ENCODE measurements at regions of chr1 and their contacts with region 1.

Region 1: DNA sequence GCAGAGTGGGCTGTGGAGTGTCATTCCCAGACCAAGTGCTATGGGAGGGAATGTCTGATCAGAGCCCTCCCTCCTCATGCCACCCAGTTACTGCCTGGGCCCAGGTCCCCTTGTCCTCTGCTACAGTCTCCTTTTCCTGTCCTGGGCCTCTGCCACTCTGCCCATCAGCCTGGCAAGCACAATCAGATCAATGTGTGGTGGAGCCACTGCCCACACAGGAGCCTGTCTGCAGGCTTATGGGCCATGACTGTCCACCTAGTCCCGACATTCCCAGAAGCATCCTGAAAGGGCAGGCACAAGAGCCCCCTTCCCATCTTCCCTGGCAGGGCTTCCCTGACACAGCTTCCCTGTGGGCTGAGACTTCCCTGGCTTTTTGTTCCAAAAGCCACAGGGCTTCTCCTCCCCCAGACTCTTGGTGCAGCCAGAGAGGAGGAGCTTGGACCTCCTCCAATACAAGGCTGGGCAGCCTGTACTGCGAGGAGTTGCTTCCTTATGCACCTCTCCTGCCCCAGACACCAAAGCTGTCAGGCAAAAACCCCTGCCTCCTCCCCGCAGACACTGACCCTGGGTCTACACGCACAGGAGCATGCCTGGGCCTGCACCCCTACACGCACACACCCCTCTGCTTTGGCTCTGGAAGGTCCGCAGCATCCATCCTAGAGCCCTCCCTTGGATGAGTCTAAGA is 29.2 kb upstream of the CNTN2 start:
- DNase-seq: no peak
- H3K4me3 ChIP-seq: no peak overlapping the region
- H3K27ac ChIP-seq: no peak overlapping the region
- H3K4me1 ChIP-seq: peaks cover 0 to 21% (median 7%) of the 10 kb centered on the region in 4 experiments; a peak in 5 of 7 replicates
- H3K27me3 ChIP-seq: no peaks in the 10 kb centered on the region
- CTCF ChIP-seq: no peak
- EP300 ChIP-seq: no peak
- POLR2A ChIP-seq: no peak
- RAD21 ChIP-seq: no peak

Region 2: DNA sequence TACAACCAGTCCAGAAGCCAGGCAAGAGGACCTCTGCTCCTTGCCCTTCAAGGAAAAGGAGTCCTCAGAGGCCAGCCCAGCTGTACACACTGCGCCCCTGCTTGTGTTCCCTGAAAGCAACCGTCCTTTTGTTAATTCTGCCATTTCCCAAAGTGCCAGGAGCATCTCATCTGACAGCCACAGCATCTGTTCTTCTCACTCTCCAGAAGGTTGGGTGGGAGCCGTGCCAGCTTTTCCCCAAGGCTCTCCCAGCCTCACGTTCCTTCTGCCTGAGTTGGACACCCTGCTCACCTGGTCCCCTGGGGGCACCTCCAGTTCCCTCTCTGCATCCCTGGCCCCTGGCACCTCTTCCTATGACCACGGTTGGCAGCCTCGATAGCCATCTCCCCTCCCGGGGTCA is 18.7 kb after region 1 on chr1:
- CTCF ChIA-PET with region 1: interaction called, 531 read pairs
- POLR2A ChIA-PET with region 1: no interaction called
- DNase-seq: no peak
- H3K4me3 ChIP-seq: no peak overlapping the region
- H3K27ac ChIP-seq: no peak overlapping the region
- H3K4me1 ChIP-seq: peaks cover 0 to 7% (median 3%) of the 10 kb centered on the region in 4 experiments; a peak in 4 of 7 replicates
- H3K27me3 ChIP-seq: no peaks in the 10 kb centered on the region
- CTCF ChIP-seq: no peak
- EP300 ChIP-seq: no peak
- POLR2A ChIP-seq: no peak
- RAD21 ChIP-seq: no peak

Region 3: DNA sequence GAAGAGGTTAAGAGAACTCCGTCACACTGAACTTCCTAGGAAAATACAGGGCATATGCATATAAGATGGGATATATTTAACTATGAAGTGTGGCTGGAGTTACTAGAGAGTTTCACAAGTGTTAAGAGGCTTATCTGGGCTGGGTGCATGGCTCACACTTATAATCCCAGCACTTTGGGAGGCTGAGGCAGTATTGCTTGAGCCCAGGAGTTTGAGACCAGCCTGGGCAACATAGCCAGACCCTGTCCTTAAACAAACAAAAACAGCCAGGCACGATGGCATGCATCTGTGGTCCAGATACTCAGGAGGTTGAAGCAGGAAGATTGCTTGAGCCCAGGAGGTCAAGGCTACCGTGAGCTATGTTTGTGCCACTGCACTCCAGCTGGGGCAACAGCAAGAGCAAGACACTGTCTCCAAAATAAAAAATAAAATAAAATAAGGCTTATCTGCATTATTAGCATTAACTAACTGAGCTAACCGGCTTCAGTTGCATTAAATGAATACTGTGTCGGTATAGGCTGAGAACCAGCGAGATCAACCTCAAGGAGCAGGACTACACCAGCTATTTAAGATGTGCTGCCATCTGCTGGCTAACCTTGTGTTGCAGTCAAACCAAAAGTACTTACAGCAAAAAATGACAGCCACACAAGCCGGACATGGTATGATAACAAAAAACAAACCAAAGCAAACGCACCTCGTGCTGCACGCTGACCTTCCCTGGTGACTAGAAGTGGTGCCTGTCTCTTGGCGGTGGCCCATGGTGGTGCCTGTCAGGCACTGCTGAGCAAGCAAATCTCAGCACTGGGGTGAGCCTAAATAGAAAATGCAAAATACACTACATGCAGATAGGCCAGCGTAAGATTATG is 127.6 kb after region 1 on chr1:
- CTCF ChIA-PET with region 1: no interaction called
- POLR2A ChIA-PET with region 1: no interaction called
- DNase-seq: peak; percentile 57 to 87
- H3K4me3 ChIP-seq: no peak overlapping the region
- H3K27ac ChIP-seq: no peak overlapping the region
- H3K4me1 ChIP-seq: peaks cover 0 to 3% (median 1%) of the 10 kb centered on the region in 4 experiments; a peak in 2 of 7 replicates
- H3K27me3 ChIP-seq: no peaks in the 10 kb centered on the region
- CTCF ChIP-seq: peak; percentile 17 to 83 (median 79)
- EP300 ChIP-seq: no peak
- POLR2A ChIP-seq: no peak
- RAD21 ChIP-seq: peak; percentile 61 to 71